ENCODE measurements at regions of chr7 and their contacts with region 1.

Region 1: DNA sequence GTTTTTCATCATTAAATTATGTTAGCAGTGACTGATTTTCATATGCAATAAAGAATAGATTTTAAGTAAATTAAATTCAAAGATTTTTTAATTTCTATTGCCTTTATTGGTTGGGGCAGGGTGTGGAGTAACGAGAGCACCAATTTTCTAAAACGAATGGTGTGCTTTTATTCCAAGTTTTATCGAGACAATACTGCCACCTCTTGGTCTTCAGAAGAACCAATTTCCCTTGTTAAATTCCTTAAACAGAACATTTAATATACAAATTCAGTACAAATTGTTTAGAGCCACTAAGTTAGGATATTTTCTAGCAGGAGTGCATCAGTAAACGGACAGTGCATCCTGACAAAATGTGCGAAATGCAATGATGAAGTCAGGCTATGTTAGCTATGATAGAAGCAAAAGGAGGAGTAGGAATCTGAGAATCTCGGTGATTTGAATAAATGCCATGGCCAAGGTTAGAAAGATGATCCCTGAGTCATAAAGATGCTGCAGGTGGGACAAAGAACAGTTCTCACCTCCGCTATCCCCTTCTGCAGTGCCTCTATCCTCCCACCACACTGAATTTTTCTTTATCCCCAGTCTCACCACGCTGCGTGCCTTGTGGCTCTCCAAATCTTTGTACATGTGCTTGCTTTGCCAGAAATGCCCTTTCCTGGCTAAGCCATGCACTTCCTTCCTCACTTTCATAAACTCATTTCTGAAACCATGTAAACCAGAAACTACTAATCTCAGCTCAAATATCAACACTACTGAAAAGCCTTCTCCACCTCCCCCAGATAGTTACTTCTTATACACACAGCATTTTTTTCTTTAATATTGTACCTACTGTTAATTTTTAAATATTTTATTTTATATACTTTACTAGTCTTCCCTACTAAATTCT is 31.9 kb upstream of the AGBL3 start:
- ATAC-seq: peak in 1 of 8 experiments; percentile 33
- H3K4me3 ChIP-seq: no peak overlapping the region
- H3K27ac ChIP-seq: no peak overlapping the region
- H3K4me1 ChIP-seq: no peaks in the 10 kb centered on the region

Region 2: GRCh38 chr7:134432296-134433152 is 521.9 kb before region 1 on chr7:
- in situ Hi-C with region 1: loop called in 1 of 9 experiments (anchors 25 kb)
- ATAC-seq: peak; percentile 94 to 99 (median 98)
- H3K4me3 ChIP-seq: peak overlapping the region; percentile 12 to 24 (median 19)
- H3K27ac ChIP-seq: no peak overlapping the region
- H3K4me1 ChIP-seq: peaks cover 0 to 3% of the 10 kb centered on the region in 2 donors

Region 3: GRCh38 chr7:134690016-134690415 is 264.4 kb before region 1 on chr7:
- in situ Hi-C with region 1: loop called in 2 of 9 experiments (anchors 25 kb)
- ATAC-seq: peak in 4 of 8 experiments; percentile 57 to 84 (median 70)
- H3K4me3 ChIP-seq: no peak overlapping the region
- H3K27ac ChIP-seq: no peak overlapping the region
- H3K4me1 ChIP-seq: no peaks in the 10 kb centered on the region

Region 4: GRCh38 chr7:135170274-135170997 is 216.0 kb after region 1 on chr7 and contains the start of gene CYREN:
- in situ Hi-C with region 1: loop called in 1 of 9 experiments (anchors 25 kb)
- ATAC-seq: peak; percentile 91 to 98 (median 97)
- H3K4me3 ChIP-seq: peak within 1 kb of the TSS; percentile 56 to 98 (median 91)
- H3K27ac ChIP-seq: peak within 1 kb of the TSS; percentile 60 to 93
- H3K4me1 ChIP-seq: peaks cover 5 to 10% of the 10 kb centered on the region in 2 donors
- total RNA-seq, gene CYREN: 13.0 to 47.3 (median 28.4) TPM

Measured in motor neuron (in vitro differentiated cells).